ENCODE measurements at regions of chr7 and their contacts with region 1.

Region 1: DNA sequence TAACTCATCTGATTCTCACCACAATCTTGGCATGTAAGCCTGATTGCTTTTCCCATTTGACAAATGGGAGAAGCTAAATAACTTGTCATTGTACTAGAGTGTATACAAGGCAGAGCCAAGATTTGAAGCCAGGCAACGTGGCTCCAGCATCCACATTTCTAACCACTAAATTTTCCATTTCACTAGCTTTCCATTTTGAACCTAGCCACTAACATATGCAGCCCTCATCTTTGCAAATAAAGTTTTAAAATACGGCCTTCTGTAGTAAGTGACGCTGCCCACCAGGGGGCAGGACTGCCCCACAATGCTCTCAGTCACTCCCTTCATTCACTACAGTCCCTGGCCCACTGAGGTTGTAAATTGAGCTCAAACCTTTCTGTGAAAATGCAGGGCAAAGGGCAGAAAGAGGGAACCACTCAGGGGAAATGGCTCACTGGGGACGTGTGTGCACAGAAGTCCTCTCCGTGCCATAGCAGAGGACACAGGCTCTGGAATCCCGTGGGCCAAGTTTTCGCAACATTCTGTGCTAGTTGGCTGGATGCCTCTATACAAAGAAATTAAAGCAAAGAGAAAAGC is 315.7 kb downstream of the TNS3 start:
- DNase-seq: no peak
- H3K4me3 ChIP-seq: no peak overlapping the region
- CTCF ChIP-seq: peak; percentile 82

Region 2: GRCh38 chr7:47285860-47286522 is 19.8 kb after region 1 on chr7:
- CTCF ChIA-PET with region 1: interaction called, 45 read pairs
- POLR2A ChIA-PET with region 1: no interaction called
- DNase-seq: peak; percentile 71
- H3K4me3 ChIP-seq: no peak overlapping the region
- CTCF ChIP-seq: peak; percentile 34

Region 3: GRCh38 chr7:47327698-47328391 is 61.6 kb after region 1 on chr7:
- CTCF ChIA-PET with region 1: interaction called, 13 read pairs
- POLR2A ChIA-PET with region 1: no interaction called
- DNase-seq: no peak
- H3K4me3 ChIP-seq: peak overlapping the region; percentile 55
- CTCF ChIP-seq: no peak

Region 4: GRCh38 chr7:47392231-47392759 is 126.1 kb after region 1 on chr7:
- CTCF ChIA-PET with region 1: interaction called, 40 read pairs
- POLR2A ChIA-PET with region 1: no interaction called
- DNase-seq: no peak
- H3K4me3 ChIP-seq: no peak overlapping the region
- CTCF ChIP-seq: peak; percentile 71

Region 5: GRCh38 chr7:47435889-47436312 is 169.7 kb after region 1 on chr7:
- CTCF ChIA-PET with region 1: interaction called, 78 read pairs
- POLR2A ChIA-PET with region 1: no interaction called
- DNase-seq: peak; percentile 59
- H3K4me3 ChIP-seq: no peak overlapping the region
- CTCF ChIP-seq: peak; percentile 75

Region 6: GRCh38 chr7:47587389-47587788 is 321.2 kb after region 1 on chr7:
- CTCF ChIA-PET with region 1: no interaction called
- POLR2A ChIA-PET with region 1: no interaction called
- DNase-seq: no peak
- H3K4me3 ChIP-seq: no peak overlapping the region
- CTCF ChIP-seq: no peak

Region 7: GRCh38 chr7:47818796-47819606 is 552.8 kb after region 1 on chr7:
- CTCF ChIA-PET with region 1: interaction called, 24 read pairs
- POLR2A ChIA-PET with region 1: no interaction called
- DNase-seq: peak; percentile 23
- H3K4me3 ChIP-seq: no peak overlapping the region
- CTCF ChIP-seq: peak; percentile 85

Region 8: DNA sequence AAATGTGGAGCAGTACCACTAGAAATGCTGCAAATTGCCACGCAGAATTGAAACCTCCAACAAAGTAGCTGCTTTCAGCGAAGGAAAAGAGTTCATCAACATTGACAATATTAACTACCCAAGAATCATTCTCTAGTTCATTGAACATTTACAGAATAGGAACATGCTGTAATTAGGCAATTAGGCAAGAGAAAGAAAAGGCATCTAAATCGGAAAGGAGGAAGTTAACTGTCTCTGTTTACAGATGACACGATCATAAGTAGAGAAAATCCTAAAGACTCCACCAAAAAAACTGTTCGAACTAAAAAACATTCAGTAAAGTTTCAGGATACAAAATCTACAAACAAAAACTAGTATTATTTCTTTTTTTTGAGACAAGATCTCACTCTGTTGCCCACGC is 690.9 kb after region 1 on chr7:
- CTCF ChIA-PET with region 1: no interaction called
- POLR2A ChIA-PET with region 1: no interaction called
- DNase-seq: no peak
- H3K4me3 ChIP-seq: no peak overlapping the region
- CTCF ChIP-seq: no peak

Region 9: GRCh38 chr7:47968847-47969774 is 702.9 kb after region 1 on chr7:
- CTCF ChIA-PET with region 1: interaction called, 22 read pairs
- POLR2A ChIA-PET with region 1: no interaction called
- DNase-seq: no peak
- H3K4me3 ChIP-seq: no peak overlapping the region
- CTCF ChIP-seq: peak; percentile 90